A549 (cell line): ENCODE measurements at regions of chr1 and their contacts with region 1.

Region 1: GRCh38 chr1:230104395-230105244 is 37.6 kb downstream of the GALNT2 start:
- DNase-seq: peak; percentile 97 to 98
- ATAC-seq: peak; percentile 81 to 89
- H3K4me3 ChIP-seq: peak overlapping the region; percentile 40; the same call in 2 of the 3 replicates
- H3K27ac ChIP-seq: peak overlapping the region; percentile 94
- H3K4me1 ChIP-seq: peaks cover 71% of the 10 kb centered on the region
- CTCF ChIP-seq: no peak
- EP300 ChIP-seq: peak; percentile 93 to 98; a peak in 4 of 5 replicates
- POLR2A ChIP-seq: no peak
- RAD21 ChIP-seq: peak in 1 of 2 experiments; percentile 61

Region 2: GRCh38 chr1:230084138-230084880 is 20.3 kb before region 1 on chr1:
- CTCF ChIA-PET with region 1: interaction called, 5 read pairs
- POLR2A ChIA-PET with region 1: interaction called, 35 read pairs
- DNase-seq: peak; percentile 90 to 97
- ATAC-seq: peak; percentile 95
- H3K4me3 ChIP-seq: no peak overlapping the region; the same call in 2 of the 3 replicates
- H3K27ac ChIP-seq: peak overlapping the region; percentile 86 to 94
- H3K4me1 ChIP-seq: peaks cover 65% of the 10 kb centered on the region
- CTCF ChIP-seq: no peak
- EP300 ChIP-seq: peak; percentile 58 to 80; a peak in 2 of 5 replicates
- POLR2A ChIP-seq: no peak
- RAD21 ChIP-seq: peak; percentile 26 to 42; a peak in 4 of 5 replicates

Region 3: DNA sequence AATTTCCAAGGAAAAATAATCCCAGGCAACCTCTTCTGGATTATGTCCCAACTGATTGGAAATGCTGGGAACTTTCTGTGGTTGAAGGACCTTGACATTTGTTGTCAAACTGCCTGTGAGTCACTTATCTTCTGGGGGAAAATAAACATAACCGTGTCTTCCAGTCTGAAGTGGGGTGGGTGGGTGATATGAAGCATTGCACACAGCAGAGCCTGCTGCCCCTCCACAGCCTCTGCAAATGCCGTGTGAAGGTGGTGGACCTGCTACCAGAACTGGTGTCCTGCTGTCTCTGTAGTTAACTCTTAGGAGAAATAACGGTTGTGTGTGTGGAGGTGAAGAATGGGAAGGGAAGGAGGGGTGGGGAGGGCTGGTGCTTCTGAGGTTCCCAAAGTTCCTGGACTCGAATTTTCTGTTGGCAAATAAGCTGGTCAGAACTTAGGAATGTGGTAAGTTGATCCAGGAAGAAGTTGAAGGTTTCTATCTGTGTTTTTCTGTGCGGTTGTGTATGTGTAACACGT is 14.4 kb before region 1 on chr1:
- CTCF ChIA-PET with region 1: interaction called, 25 read pairs
- POLR2A ChIA-PET with region 1: interaction called, 35 read pairs
- DNase-seq: peak; percentile 53 to 67
- ATAC-seq: peak; percentile 75 to 77
- H3K4me3 ChIP-seq: peak overlapping the region; percentile 3; the same call in 2 of the 3 replicates
- H3K27ac ChIP-seq: peak overlapping the region; percentile 59 to 94
- H3K4me1 ChIP-seq: peaks cover 72% of the 10 kb centered on the region
- CTCF ChIP-seq: no peak
- EP300 ChIP-seq: peak in 1 of 2 experiments; percentile 29; a peak in 1 of 5 replicates
- POLR2A ChIP-seq: no peak
- RAD21 ChIP-seq: 0 out of 5 replicates have a peak, but pooled peaks of 1 of the 2 experiments have one; percentile 17